WTC11 (cell line): ENCODE measurements at regions of chr2 and their contacts with region 1.

Region 1: DNA sequence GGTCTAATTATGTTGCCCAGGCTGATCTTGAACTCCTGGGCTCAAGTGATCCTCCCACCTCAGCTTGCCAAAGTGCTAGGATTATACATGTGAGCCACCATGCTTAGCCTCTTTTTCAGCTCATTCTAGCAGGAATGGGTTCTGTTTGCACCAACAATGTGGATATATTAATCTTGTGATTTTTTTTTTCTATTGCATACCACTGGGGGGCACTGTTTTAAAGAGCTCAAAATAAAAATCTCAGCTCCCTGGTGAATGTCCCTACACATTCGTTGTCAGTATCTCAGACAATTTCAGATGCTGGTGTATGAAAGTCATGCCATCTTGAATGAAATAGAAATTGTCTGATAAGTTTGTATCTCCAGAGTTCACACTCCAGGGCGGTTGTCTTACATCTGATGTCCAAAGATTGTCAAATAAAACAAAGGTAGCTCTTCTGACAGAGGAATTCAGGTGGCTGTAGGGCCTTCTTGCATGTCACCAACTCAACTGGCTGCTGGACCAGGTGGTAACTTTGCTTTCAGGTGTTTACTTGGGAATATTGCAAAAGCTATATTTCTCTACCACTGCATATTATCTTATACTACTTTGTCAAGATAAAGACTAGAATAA is 3.1 kb upstream of the MATN3 start:
- DNase-seq: no peak
- ATAC-seq: no peak
- H3K4me3 Mint-ChIP-seq: no peak overlapping the region
- H3K27ac Mint-ChIP-seq: no peak overlapping the region
- H3K4me1 Mint-ChIP-seq: peaks cover 15% of the 10 kb centered on the region
- H3K27me3 Mint-ChIP-seq: peaks cover 38% of the 10 kb centered on the region
- CTCF ChIP-seq: peak; percentile 38

Region 2: GRCh38 chr2:19955544-19956422 is 59.8 kb before region 1 on chr2:
- CTCF ChIA-PET with region 1: interaction called, 12 read pairs
- POLR2A ChIA-PET with region 1: interaction called, 4 read pairs
- DNase-seq: peak; percentile 59
- ATAC-seq: peak; percentile 100
- H3K4me3 Mint-ChIP-seq: no peak overlapping the region
- H3K27ac Mint-ChIP-seq: no peak overlapping the region
- H3K4me1 Mint-ChIP-seq: no peaks in the 10 kb centered on the region
- H3K27me3 Mint-ChIP-seq: no peaks in the 10 kb centered on the region
- CTCF ChIP-seq: peak; percentile 50; the same call in 1 of the 2 replicates

Region 3: GRCh38 chr2:20001361-20001863 is 14.2 kb before region 1 on chr2:
- CTCF ChIA-PET with region 1: interaction called, 11 read pairs
- POLR2A ChIA-PET with region 1: no interaction called
- DNase-seq: no peak
- ATAC-seq: no peak
- H3K4me3 Mint-ChIP-seq: no peak overlapping the region
- H3K27ac Mint-ChIP-seq: no peak overlapping the region
- H3K4me1 Mint-ChIP-seq: no peaks in the 10 kb centered on the region
- H3K27me3 Mint-ChIP-seq: no peaks in the 10 kb centered on the region
- CTCF ChIP-seq: no peak

Region 4: GRCh38 chr2:20042531-20042930 is 27.0 kb after region 1 on chr2:
- CTCF ChIA-PET with region 1: interaction called, 62 read pairs
- POLR2A ChIA-PET with region 1: interaction called, 3 read pairs
- DNase-seq: no peak
- ATAC-seq: no peak
- H3K4me3 Mint-ChIP-seq: no peak overlapping the region
- H3K27ac Mint-ChIP-seq: no peak overlapping the region
- H3K4me1 Mint-ChIP-seq: peaks cover 17% of the 10 kb centered on the region
- H3K27me3 Mint-ChIP-seq: no peaks in the 10 kb centered on the region
- CTCF ChIP-seq: no peak

Region 5: DNA sequence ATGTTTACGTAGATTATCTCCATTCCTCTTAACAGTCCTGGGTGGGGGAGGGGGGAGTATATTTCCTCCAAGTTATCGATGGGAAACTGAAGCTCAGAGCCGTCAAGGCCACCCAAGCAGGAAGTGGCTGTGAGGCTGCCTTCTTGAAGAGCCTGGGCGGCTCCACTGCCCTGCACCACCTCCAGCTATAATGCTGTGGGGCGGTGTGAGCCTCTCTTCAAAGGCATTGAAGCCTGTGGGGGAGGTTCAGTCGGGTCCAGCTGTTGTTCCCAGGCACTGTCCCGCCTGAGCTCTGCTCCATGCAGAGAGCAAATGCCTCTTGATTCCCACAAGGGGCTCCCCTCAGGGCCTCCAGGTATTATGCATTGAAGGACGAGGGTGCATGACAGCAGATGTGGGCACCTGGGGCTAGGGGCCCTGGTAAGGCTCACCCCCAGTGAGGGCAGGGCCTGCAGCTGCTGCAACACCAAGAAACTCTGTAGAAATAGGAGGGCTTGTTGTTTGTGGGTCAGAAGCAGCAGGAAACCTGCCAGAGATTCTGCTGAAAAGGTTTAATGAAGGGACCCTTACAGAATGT is 65.3 kb after region 1 on chr2:
- CTCF ChIA-PET with region 1: interaction called, 18 read pairs
- POLR2A ChIA-PET with region 1: no interaction called
- DNase-seq: peak; percentile 33
- ATAC-seq: peak; percentile 81
- H3K4me3 Mint-ChIP-seq: no peak overlapping the region
- H3K27ac Mint-ChIP-seq: no peak overlapping the region
- H3K4me1 Mint-ChIP-seq: peaks cover 8% of the 10 kb centered on the region
- H3K27me3 Mint-ChIP-seq: no peaks in the 10 kb centered on the region; the same call in none of the 2 replicates
- CTCF ChIP-seq: no peak

Region 6: GRCh38 chr2:20106746-20107145 is 91.2 kb after region 1 on chr2:
- CTCF ChIA-PET with region 1: interaction called, 15 read pairs
- POLR2A ChIA-PET with region 1: no interaction called
- DNase-seq: peak; percentile 91
- ATAC-seq: peak; percentile 92
- H3K4me3 Mint-ChIP-seq: peak overlapping the region; percentile 64
- H3K27ac Mint-ChIP-seq: no peak overlapping the region
- H3K4me1 Mint-ChIP-seq: peaks cover 7% of the 10 kb centered on the region
- H3K27me3 Mint-ChIP-seq: peaks cover 43% of the 10 kb centered on the region
- CTCF ChIP-seq: peak; percentile 55